Activated naive CD4-positive, alpha-beta T cell treated with anti-CD3 and anti-CD28 coated beads for 36 hours (primary cell): ENCODE measurements at regions of chr12 and their contacts with region 1.

Region 1: DNA sequence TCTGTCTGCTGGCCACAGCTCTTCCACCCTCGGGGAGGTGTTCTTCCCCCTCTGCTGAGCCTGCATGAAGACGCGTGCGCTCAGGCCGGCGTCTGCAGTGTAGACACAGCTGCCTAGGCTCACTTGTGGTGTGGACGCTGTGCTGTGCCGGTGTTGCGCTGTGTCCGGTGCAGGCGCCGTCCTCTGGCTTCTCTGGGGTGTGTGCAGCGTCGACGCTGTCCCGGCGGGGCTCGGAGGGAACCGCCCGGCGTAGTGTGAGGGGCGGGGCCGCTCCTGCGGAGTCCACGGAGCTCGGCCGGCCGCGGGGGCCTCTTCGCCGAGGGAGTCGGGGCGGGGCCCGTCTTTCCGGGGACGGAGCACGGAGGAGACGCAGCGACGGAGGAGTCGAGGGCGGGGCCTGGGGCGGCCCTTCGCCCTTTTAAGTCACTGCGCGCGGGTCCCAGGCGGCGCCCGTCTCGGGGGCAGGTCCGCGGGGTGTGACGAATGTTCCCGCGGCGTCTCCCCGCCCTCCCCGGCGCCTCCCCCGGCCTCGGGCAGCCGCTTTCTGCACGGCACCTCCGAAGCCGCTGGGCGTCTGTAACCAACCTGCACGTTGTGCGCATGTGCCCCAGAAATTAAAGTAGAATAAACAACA is 45.2 kb downstream of the NOC4L start:
- DNase-seq: peak; percentile 92
- H3K4me3 Mint-ChIP-seq: peak overlapping the region; percentile 89
- H3K27ac Mint-ChIP-seq: peak overlapping the region; percentile 50
- H3K4me1 Mint-ChIP-seq: peaks cover 31% of the 10 kb centered on the region
- H3K27me3 Mint-ChIP-seq: no peaks in the 10 kb centered on the region

Region 2: DNA sequence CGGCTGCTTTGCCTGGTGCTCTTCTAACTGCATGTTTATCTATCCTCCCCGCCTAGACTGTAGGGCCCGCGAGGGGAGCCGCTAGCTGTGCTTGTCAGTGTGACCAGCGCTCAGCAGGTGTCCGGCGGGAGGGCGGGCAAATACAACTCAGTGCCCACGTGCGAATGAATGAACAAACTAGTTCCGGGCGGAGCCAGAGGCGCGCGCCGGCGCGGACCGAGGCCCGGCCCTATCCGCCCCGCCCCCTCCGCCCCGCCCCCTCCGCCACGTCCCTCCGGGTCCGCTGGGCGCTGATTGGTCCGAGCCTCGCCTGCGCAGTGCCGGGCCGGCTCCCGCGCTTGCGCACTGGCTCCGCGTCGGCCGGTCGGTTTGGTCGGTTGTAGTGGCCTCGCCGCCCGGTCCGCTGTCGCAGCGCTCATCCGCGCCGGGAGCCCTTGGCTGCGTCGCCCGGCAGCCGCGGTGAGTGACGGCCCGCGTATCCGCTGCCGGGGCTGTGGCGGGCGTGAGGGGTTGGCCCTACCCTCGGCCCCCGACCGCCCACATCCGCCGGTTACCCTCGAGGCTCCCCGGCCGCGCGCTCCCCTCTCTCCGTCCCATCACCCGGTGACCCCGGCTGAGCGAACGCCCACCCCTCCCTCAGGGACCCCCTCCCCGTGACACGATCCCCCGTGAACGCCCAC is 105.4 kb before region 1 on chr12:
- CTCF ChIA-PET with region 1: no interaction called
- intact Hi-C with region 1: loop called (anchors 1 kb)
- DNase-seq: peak; percentile 87
- H3K4me3 Mint-ChIP-seq: peak overlapping the region; percentile 96
- H3K27ac Mint-ChIP-seq: peak overlapping the region; percentile 90
- H3K4me1 Mint-ChIP-seq: peaks cover 32% of the 10 kb centered on the region
- H3K27me3 Mint-ChIP-seq: no peaks in the 10 kb centered on the region

Region 3: GRCh38 chr12:132153501-132154340 is 35.8 kb before region 1 on chr12:
- CTCF ChIA-PET with region 1: interaction called, 4 read pairs
- intact Hi-C with region 1: loop called (anchors 2 kb)
- DNase-seq: peak; percentile 69
- H3K4me3 Mint-ChIP-seq: no peak overlapping the region
- H3K27ac Mint-ChIP-seq: no peak overlapping the region
- H3K4me1 Mint-ChIP-seq: no peaks in the 10 kb centered on the region
- H3K27me3 Mint-ChIP-seq: no peaks in the 10 kb centered on the region

Region 4: DNA sequence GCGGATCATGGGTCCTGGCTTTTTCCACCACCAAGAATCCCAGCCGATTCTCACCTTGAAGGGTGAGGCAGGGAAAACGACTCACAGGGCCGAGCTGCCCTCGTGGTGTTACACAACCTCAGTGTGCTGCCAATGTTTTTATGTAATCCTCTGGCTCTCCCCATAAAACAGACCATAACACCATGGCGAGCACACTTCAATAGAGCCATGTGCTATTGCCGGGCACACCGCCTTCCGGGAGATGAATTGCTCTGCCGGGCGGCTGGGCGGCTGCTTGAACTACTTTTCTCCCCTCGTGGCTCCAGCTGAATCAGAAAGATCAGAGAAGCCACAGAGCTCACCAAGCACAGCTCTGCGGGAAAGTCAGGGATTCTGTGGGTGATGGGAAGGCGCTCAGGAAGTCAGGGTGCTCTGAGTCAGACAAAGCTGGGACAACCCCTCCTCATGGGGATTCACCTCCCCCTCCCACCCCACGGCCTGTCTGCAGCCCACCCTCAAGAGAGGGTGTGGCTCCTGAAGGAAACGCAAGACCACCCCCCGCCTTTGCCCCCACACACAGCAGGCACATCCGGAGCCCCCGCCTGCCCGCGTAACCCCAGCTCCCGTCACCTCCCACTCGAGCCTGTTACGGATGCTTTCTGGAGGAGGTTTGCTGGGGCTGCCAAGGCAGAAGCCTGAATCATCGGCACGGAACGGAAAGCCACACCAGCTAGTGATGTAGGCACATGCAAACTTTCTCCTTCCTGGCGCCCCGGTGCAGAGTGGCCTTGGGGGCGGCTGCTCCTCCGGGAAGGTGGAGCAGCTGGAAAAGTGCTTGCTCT is 138.1 kb after region 1 on chr12:
- CTCF ChIA-PET with region 1: no interaction called
- intact Hi-C with region 1: loop called (anchors 2 kb)
- DNase-seq: peak; percentile 89
- H3K4me3 Mint-ChIP-seq: peak overlapping the region; percentile 50
- H3K27ac Mint-ChIP-seq: peak overlapping the region; percentile 88
- H3K4me1 Mint-ChIP-seq: peaks cover 35% of the 10 kb centered on the region
- H3K27me3 Mint-ChIP-seq: peaks cover 32% of the 10 kb centered on the region

Region 5: GRCh38 chr12:132710422-132711168 is 521.1 kb after region 1 on chr12 and contains the start of gene PGAM5:
- CTCF ChIA-PET with region 1: no interaction called
- intact Hi-C with region 1: loop called (anchors 2 kb)
- DNase-seq: peak; percentile 86
- H3K4me3 Mint-ChIP-seq: peak within 1 kb of the TSS; percentile 85
- H3K27ac Mint-ChIP-seq: peak within 1 kb of the TSS; percentile 66
- H3K4me1 Mint-ChIP-seq: peaks cover 27% of the 10 kb centered on the region
- H3K27me3 Mint-ChIP-seq: no peaks in the 10 kb centered on the region
- total RNA-seq, gene PGAM5: 50.1 to 55.7 TPM